Naive thymus-derived CD4-positive, alpha-beta T cell (primary cell): ENCODE measurements at regions of chr16 and their contacts with region 1.

Region 1: DNA sequence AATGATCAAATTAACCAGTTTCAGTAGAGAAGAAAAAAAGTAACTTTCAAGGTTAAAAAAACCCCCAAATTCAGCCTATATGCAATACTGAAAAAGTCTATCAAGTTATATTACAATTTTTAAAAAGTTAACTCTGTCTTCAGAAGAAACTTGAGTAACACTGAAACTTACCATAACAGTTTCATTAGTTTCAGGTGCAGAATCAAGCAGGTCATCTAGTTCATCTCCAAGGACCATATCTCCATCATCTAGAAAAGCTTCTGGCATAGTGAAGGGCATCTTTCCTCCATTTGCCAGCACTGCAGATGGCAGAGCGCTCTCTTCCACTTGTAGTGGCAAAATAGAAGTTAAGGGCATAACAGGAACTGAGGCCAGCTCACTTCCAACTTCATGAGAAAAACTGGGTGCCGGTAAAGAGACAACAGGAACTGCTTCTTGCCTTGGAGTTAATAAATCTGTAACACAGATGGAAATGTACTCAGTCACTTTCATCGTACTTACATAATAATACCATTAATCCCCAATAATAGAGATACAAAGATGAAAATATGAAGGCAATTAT is 22.9 kb downstream of the ZC3H7A start:
- DNase-seq: no peak
- ATAC-seq: no peak
- H3K4me3 ChIP-seq: no peak overlapping the region
- H3K4me3 Mint-ChIP-seq: no peak overlapping the region
- H3K27ac ChIP-seq: no peak overlapping the region
- H3K27ac Mint-ChIP-seq: peak overlapping the region in 1 of 9 donors; percentile 52
- H3K4me1 ChIP-seq: peaks cover 0 to under 1% of the 10 kb centered on the region in 2 donors
- H3K4me1 Mint-ChIP-seq: peaks cover 0 to 19% (median 2%) of the 10 kb centered on the region in 7 donors
- H3K27me3 ChIP-seq: no peaks in the 10 kb centered on the region
- H3K27me3 Mint-ChIP-seq: no peaks in the 10 kb centered on the region

Region 2: GRCh38 chr16:11333711-11334110 is 440.4 kb before region 1 on chr16:
- CTCF ChIA-PET with region 1: no interaction called
- POLR2A ChIA-PET with region 1: no interaction called
- intact Hi-C with region 1: no loop called
- DNase-seq: no peak
- ATAC-seq: no peak
- H3K4me3 ChIP-seq: no peak overlapping the region
- H3K4me3 Mint-ChIP-seq: no peak overlapping the region
- H3K27ac ChIP-seq: no peak overlapping the region
- H3K27ac Mint-ChIP-seq: no peak overlapping the region
- H3K4me1 ChIP-seq: peaks cover 2 to 6% of the 10 kb centered on the region in 2 donors
- H3K4me1 Mint-ChIP-seq: peaks cover 5 to 26% (median 8%) of the 10 kb centered on the region in 7 donors
- H3K27me3 ChIP-seq: no peaks in the 10 kb centered on the region
- H3K27me3 Mint-ChIP-seq: peaks cover 0 to 4% (median 0%) of the 10 kb centered on the region in 5 donors

Region 3: GRCh38 chr16:11698271-11698689 is 75.9 kb before region 1 on chr16:
- CTCF ChIA-PET with region 1: no interaction called
- POLR2A ChIA-PET with region 1: no interaction called
- intact Hi-C with region 1: no loop called
- DNase-seq: no peak
- ATAC-seq: peak; percentile 50
- H3K4me3 ChIP-seq: no peak overlapping the region
- H3K4me3 Mint-ChIP-seq: peak overlapping the region in 1 of 10 donors; percentile 16
- H3K27ac ChIP-seq: no peak overlapping the region
- H3K27ac Mint-ChIP-seq: peak overlapping the region in 8 of 9 donors; percentile 19 to 77 (median 30)
- H3K4me1 ChIP-seq: peaks cover 6 to 7% of the 10 kb centered on the region in 2 donors
- H3K4me1 Mint-ChIP-seq: peaks cover 31 to 63% (median 46%) of the 10 kb centered on the region in 7 donors
- H3K27me3 ChIP-seq: no peaks in the 10 kb centered on the region
- H3K27me3 Mint-ChIP-seq: no peaks in the 10 kb centered on the region

Region 4: DNA sequence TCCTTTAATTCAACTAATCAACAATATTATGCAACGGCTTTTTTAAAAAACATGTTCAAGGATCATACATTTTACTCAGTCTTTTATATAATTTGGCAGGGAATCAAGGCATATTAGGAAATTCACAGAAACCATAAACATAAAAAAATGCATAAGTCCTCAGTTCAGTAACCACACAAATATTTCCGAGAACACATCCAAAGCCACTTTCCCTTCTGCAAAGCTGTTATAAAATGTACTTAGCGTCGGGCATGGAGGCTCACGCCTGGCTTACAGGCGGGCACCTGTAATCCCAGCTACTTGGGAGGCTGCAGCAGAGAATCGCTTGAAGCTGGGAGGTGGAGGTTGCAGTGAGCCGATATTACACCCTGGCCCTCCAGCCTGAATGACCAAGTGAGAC is 32.6 kb after region 1 on chr16:
- CTCF ChIA-PET with region 1: no interaction called
- POLR2A ChIA-PET with region 1: interaction called, 3 read pairs
- intact Hi-C with region 1: loop called in 1 of 2 experiments (anchors 5 kb)
- DNase-seq: no peak
- ATAC-seq: no peak
- H3K4me3 ChIP-seq: no peak overlapping the region
- H3K4me3 Mint-ChIP-seq: no peak overlapping the region
- H3K27ac ChIP-seq: no peak overlapping the region
- H3K27ac Mint-ChIP-seq: no peak overlapping the region
- H3K4me1 ChIP-seq: no peaks in the 10 kb centered on the region
- H3K4me1 Mint-ChIP-seq: peaks cover 5 to 12% (median 11%) of the 10 kb centered on the region in 7 donors
- H3K27me3 ChIP-seq: no peaks in the 10 kb centered on the region
- H3K27me3 Mint-ChIP-seq: no peaks in the 10 kb centered on the region

Region 5: GRCh38 chr16:11949527-11949926 is 175.4 kb after region 1 on chr16:
- CTCF ChIA-PET with region 1: no interaction called
- POLR2A ChIA-PET with region 1: no interaction called
- intact Hi-C with region 1: no loop called
- DNase-seq: peak in 3 of 9 donors; percentile 25 to 31 (median 25)
- ATAC-seq: peak; percentile 59
- H3K4me3 ChIP-seq: no peak overlapping the region
- H3K4me3 Mint-ChIP-seq: no peak overlapping the region
- H3K27ac ChIP-seq: no peak overlapping the region
- H3K27ac Mint-ChIP-seq: no peak overlapping the region
- H3K4me1 ChIP-seq: no peaks in the 10 kb centered on the region
- H3K4me1 Mint-ChIP-seq: peaks cover 0 to 6% (median 0%) of the 10 kb centered on the region in 7 donors
- H3K27me3 ChIP-seq: no peaks in the 10 kb centered on the region
- H3K27me3 Mint-ChIP-seq: no peaks in the 10 kb centered on the region